ENCODE measurements at regions of chr15 and their contacts with region 1.

Region 1: GRCh38 chr15:42581272-42581730 is 5.9 kb downstream of the STARD9 start:
- DNase-seq: peak; percentile 68
- ATAC-seq: peak; percentile 99
- H3K4me3 ChIP-seq: peak overlapping the region; percentile 60
- H3K27ac ChIP-seq: peak overlapping the region; percentile 47; the same call in 1 of the 2 replicates
- H3K4me1 ChIP-seq: peaks cover 12% of the 10 kb centered on the region
- H3K27me3 ChIP-seq: no peaks in the 10 kb centered on the region
- CTCF ChIP-seq: no peak
- POLR2A ChIP-seq: no peak
- RAD21 ChIP-seq: no peak

Region 2: DNA sequence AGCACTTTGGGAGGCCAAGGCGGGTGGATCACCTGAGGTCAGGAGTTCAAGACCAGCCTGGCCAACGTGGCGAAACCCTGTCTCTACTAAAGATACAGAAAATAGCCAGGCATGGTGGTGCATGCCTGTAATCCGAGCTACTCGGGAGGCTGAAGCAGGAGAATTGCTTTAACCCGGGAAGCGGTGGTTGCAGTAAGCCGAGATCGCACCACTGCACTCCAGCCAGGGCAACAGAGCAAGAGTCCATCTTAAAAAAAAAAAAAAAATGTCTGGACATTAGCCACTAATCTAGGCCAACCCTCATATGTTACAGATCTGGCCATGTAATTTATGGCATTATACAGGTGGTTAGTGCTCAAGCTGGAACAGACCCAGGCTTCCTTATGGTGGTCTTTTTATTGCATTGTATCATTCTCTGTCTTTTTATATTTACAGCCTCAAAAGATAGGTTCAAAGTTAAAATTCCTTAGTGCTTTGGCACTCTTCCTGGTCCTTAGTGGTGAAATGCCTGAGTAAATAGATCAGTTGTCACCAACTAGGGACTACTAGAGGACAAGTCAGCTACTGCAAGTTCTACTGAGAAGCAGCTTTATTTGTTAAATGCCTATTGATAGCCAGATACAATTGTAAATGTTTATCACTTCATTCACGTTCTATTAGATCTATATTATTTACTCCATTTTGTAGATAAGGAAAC is 10.1 kb after region 1 on chr15:
- CTCF ChIA-PET with region 1: interaction called, 5 read pairs
- POLR2A ChIA-PET with region 1: interaction called, 13 read pairs
- dilution Hi-C with region 1: no loop called
- in situ Hi-C with region 1: no loop called
- intact Hi-C with region 1: no loop called
- DNase-seq: peak; percentile 54
- ATAC-seq: peak; percentile 71
- H3K4me3 ChIP-seq: no peak overlapping the region
- H3K27ac ChIP-seq: no peak overlapping the region
- H3K4me1 ChIP-seq: peaks cover 8% of the 10 kb centered on the region
- H3K27me3 ChIP-seq: no peaks in the 10 kb centered on the region
- CTCF ChIP-seq: peak; percentile 41
- POLR2A ChIP-seq: no peak
- RAD21 ChIP-seq: no peak

Region 3: DNA sequence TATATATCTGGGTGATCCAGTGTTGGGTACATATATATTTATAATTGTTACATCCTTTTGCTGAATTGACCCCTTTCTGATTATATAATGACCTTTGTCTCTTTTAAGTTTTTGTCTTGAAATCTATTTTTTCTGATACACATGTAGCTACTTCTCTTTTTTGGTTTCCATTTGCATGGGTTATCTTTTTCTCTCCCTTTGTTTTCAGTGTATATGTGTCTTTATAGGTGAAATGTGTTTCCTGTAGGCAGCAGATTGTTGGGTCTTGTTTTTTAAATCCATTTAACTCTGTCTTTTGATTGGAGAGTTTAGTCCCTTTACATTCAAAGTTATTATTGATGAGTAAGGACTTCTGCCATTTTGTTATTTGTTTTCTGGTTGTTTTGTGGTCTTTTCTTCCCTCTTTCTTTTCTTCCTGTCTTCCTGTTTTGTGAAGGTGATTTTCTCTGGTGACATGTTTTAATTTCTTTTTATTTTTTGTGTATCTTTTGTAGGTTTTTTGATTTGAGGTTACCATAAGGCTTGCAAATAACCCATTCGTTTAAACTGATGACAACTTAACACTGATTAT is 50.9 kb after region 1 on chr15:
- CTCF ChIA-PET with region 1: no interaction called
- POLR2A ChIA-PET with region 1: interaction called, 26 read pairs
- dilution Hi-C with region 1: no loop called
- in situ Hi-C with region 1: no loop called
- intact Hi-C with region 1: no loop called
- DNase-seq: no peak
- ATAC-seq: no peak
- H3K4me3 ChIP-seq: no peak overlapping the region
- H3K27ac ChIP-seq: no peak overlapping the region
- H3K4me1 ChIP-seq: no peaks in the 10 kb centered on the region
- H3K27me3 ChIP-seq: no peaks in the 10 kb centered on the region
- CTCF ChIP-seq: no peak
- POLR2A ChIP-seq: no peak
- RAD21 ChIP-seq: no peak

Measured in IMR-90 (cell line).